CD4-positive, alpha-beta T cell (primary cell): ENCODE measurements at regions of chrX and their contacts with region 1.

Region 1: GRCh38 chrX:50100188-50100587 is 100.6 kb downstream of the AKAP4 start:
- DNase-seq: peak in 3 of 14 experiments; percentile 3 to 9 (median 4)
- ATAC-seq: no peak
- H3K4me3 ChIP-seq: no peak overlapping the region
- H3K4me3 Mint-ChIP-seq: no peak overlapping the region
- H3K27ac ChIP-seq: no peak overlapping the region
- H3K27ac Mint-ChIP-seq: no peak overlapping the region
- H3K4me1 ChIP-seq: no peaks in the 10 kb centered on the region
- H3K4me1 Mint-ChIP-seq: no peaks in the 10 kb centered on the region
- H3K27me3 ChIP-seq: no peaks in the 10 kb centered on the region
- H3K27me3 Mint-ChIP-seq: no peaks in the 10 kb centered on the region
- CTCF ChIP-seq: no peak

Region 2: DNA sequence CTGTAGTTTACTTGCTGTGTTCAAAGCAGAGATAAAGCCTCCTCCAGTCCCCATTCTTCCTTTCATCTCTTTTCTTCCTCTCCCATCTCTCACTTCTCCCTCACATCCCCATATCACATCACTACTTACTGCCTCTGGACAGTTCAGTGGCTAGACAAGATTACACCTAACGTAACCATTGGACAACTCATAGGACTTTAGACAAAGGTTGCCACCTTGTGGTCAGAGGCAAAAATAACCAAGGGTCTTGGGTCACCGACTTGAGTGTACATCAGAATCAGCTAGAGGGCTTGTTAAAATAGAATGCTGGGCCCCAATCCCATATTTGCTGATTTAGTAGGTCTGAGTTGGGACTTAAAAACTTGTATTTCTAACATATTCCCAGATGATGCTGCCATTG is 479.8 kb after region 1 on chrX:
- CTCF ChIA-PET with region 1: no interaction called
- POLR2A ChIA-PET with region 1: no interaction called
- intact Hi-C with region 1: loop called (anchors 2 to 5 kb)
- DNase-seq: peak in 9 of 14 experiments; percentile 1 to 59 (median 3)
- ATAC-seq: no peak
- H3K4me3 ChIP-seq: no peak overlapping the region
- H3K4me3 Mint-ChIP-seq: no peak overlapping the region
- H3K27ac ChIP-seq: no peak overlapping the region
- H3K27ac Mint-ChIP-seq: no peak overlapping the region
- H3K4me1 ChIP-seq: no peaks in the 10 kb centered on the region
- H3K4me1 Mint-ChIP-seq: no peaks in the 10 kb centered on the region
- H3K27me3 ChIP-seq: no peaks in the 10 kb centered on the region
- H3K27me3 Mint-ChIP-seq: peaks cover 10% of the 10 kb centered on the region
- CTCF ChIP-seq: no peak